ENCODE measurements at regions of chr9 and their contacts with region 1.

Region 1: GRCh38 chr9:126704873-126705766 is 91.4 kb downstream of the LMX1B start:
- H3K4me3 ChIP-seq: peak overlapping the region; percentile 11; the same call in 1 of the 2 replicates
- H3K27ac ChIP-seq: no peak overlapping the region
- H3K4me1 ChIP-seq: no peaks in the 10 kb centered on the region
- CTCF ChIP-seq: peak; percentile 83

Region 2: DNA sequence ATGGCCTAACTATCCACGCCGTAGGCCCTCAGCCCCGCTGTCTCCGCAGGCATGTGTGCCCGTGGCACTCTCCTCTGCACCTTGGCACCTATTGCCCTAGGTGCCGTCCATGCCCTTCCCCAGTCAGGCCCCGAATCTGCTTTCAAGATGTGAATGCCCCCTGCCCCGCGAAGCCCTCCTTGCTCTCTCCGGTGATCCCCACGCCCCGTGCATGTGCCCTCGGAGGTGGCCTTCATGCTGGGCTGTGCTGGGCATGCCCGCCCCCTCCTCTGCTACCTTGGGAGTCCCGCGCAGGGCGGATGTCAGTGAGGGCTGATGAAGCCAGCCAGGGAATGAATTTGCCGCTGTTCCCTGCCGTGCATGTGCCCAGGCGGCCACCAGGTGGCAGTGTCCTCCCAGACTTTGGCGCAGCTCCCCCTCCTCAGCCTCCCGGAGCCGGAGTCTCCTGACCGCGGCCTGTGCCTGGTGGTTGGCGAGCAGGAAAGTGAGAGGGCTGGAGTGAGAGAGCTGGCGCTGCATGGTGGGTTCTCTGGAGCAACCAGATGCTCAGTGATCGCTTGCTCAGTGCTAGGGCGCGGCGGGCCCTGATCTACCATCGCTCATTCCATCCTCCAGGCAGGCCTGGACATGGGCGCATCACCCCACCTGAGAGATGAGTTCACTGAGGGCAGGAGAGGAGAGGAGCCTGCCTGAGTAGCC is 204.3 kb before region 1 on chr9:
- CTCF ChIA-PET with region 1: interaction called, 15 read pairs
- POLR2A ChIA-PET with region 1: no interaction called
- H3K4me3 ChIP-seq: no peak overlapping the region
- H3K27ac ChIP-seq: no peak overlapping the region
- H3K4me1 ChIP-seq: no peaks in the 10 kb centered on the region; the same call in 1 of the 2 replicates
- CTCF ChIP-seq: peak; percentile 93

Region 3: DNA sequence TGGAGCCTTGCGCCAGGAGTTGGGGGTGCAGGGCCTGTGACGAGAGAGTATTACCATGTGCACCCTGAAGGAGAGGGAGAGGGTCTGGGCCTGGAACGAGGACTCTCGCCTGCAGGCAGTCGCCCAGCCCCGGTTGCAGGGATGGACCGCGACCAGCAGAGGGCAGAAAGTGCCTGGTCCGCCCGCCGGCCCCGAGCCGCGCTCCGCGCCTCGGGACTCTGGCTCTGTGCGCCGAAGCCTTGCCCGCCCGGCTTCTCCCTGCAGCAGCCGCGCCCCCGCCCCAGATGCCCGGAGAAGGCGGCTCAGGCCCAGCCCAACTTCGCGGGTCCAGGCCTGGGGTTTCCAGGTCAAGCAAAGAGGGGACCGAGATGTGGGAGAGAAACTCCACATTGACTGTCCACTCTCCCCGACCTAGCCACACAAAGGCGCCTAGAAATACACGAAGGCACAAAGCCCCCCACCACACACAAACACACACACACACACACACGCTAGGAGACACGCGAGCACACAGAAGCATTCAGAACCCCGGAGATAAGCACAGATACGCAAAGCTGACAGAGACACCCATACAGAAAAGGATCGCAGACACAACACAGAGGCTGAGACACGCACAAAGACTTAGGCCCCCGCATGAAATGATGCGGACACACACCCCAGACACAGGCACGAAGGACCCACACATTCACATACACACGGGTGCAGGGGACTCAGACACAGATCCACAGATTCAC is 93.4 kb before region 1 on chr9:
- CTCF ChIA-PET with region 1: interaction called, 19 read pairs
- POLR2A ChIA-PET with region 1: interaction called, 5 read pairs
- H3K4me3 ChIP-seq: peak overlapping the region; percentile 2
- H3K27ac ChIP-seq: peak overlapping the region; percentile 69
- H3K4me1 ChIP-seq: peaks cover 4% of the 10 kb centered on the region; the same call in 1 of the 2 replicates
- CTCF ChIP-seq: peak; percentile 74

Region 4: DNA sequence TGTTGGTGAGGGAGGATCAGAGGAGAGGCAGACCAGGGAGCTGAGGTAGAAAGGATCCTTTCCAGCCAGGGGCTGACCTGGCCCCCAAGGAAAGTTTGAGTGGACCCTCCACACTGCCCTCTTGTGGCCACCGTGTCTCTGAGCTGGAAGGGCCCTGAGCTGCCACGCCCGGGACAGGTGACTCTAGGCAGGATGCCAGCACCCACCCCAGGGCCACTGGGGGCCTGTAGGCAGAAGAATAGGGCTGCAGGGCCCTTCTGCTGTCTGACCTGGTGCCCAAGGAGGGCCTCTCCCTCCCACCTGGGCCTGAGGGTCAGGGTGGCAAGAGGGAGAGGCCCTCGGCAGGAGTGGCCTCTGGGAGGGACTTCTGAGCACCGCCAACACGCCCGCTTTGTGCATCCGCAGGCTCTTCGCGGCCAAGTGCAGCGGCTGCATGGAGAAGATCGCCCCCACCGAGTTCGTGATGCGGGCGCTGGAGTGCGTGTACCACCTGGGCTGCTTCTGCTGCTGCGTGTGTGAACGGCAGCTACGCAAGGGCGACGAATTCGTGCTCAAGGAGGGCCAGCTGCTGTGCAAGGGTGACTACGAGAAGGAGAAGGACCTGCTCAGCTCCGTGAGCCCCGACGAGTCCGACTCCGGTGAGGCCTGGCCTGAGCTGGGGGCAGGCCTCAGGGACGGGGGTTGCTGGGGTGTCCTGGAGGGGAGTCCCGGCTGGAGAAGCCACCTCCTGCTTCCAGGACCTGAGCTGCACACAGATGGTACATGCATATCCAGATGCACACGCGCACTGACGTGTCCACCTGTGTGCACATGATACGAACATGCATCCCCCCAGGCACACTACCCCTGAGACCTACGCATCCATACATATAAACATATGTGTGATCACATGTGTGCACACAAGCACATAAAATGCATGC is 14.4 kb before region 1 on chr9:
- CTCF ChIA-PET with region 1: interaction called, 114 read pairs
- POLR2A ChIA-PET with region 1: no interaction called
- H3K4me3 ChIP-seq: no peak overlapping the region
- H3K27ac ChIP-seq: no peak overlapping the region
- H3K4me1 ChIP-seq: no peaks in the 10 kb centered on the region
- CTCF ChIP-seq: peak; percentile 60; the same call in 1 of the 2 replicates

Region 5: DNA sequence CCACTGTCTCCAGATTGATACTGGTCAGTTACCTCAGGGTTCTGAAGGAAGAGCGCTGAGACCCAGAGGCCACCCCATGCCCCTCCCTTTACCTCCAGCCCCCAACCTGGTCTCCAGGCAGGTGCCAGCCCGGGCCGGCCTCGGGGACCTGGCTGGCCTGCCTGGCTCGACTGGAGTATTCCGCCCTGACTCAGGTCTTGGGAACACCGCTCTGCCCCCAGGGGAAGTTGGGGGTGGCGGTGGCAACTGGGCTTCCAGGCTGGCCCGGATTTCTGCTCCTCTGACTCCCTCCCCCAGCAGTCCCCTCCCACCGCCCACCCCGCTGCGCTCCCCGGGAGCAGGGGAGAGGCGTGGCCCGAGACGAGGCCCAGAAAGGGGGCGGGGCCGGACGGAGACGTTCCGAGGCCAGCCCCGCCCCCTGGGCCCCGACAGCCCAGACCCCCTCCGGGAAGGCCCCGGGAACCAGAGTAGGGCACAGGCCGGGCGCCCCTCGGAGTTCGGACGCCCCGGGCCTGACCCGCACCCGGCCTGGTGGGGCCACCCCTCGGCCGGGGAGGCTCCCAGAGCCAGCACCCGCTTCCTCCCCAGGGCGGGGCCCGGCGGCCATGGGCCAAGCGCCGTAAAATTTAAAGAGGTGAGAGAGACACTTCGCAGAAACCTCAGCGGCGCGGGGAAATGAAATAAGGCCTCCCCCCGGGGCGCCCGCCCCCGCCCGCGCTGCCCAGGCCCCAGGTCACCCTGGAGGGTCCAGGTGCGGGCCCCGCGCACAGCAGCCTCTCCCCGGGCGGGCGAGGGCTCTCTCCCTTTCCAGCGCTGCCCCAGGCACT is 17.3 kb after region 1 on chr9:
- CTCF ChIA-PET with region 1: interaction called, 50 read pairs
- POLR2A ChIA-PET with region 1: interaction called, 6 read pairs
- H3K4me3 ChIP-seq: peak overlapping the region; percentile 47
- H3K27ac ChIP-seq: peak overlapping the region; percentile 70; the same call in 1 of the 2 replicates
- H3K4me1 ChIP-seq: peaks cover 9% of the 10 kb centered on the region
- CTCF ChIP-seq: no peak

Region 6: GRCh38 chr9:126745574-126746411 is 40.7 kb after region 1 on chr9:
- CTCF ChIA-PET with region 1: interaction called, 32 read pairs
- POLR2A ChIA-PET with region 1: no interaction called
- H3K4me3 ChIP-seq: no peak overlapping the region
- H3K27ac ChIP-seq: no peak overlapping the region; the same call in 1 of the 2 replicates
- H3K4me1 ChIP-seq: peaks cover 4% of the 10 kb centered on the region
- CTCF ChIP-seq: no peak

Region 7: GRCh38 chr9:126781186-126782052 is 76.3 kb after region 1 on chr9:
- CTCF ChIA-PET with region 1: interaction called, 373 read pairs
- POLR2A ChIA-PET with region 1: interaction called, 13 read pairs
- H3K4me3 ChIP-seq: no peak overlapping the region
- H3K27ac ChIP-seq: no peak overlapping the region
- H3K4me1 ChIP-seq: no peaks in the 10 kb centered on the region
- CTCF ChIP-seq: peak; percentile 72; the same call in 1 of the 2 replicates

Region 8: GRCh38 chr9:126927419-126927818 is 222.3 kb after region 1 on chr9:
- CTCF ChIA-PET with region 1: no interaction called
- POLR2A ChIA-PET with region 1: no interaction called
- H3K4me3 ChIP-seq: no peak overlapping the region
- H3K27ac ChIP-seq: no peak overlapping the region
- H3K4me1 ChIP-seq: peaks cover 3% of the 10 kb centered on the region; the same call in 1 of the 2 replicates
- CTCF ChIP-seq: no peak

Measured in HEK293 (cell line).